ENCODE measurements at regions of chr17 and their contacts with region 1.

Region 1: GRCh38 chr17:31167111-31167510 is 72.3 kb downstream of the NF1 start:
- DNase-seq: no peak
- H3K4me3 Mint-ChIP-seq: no peak overlapping the region
- H3K27ac Mint-ChIP-seq: no peak overlapping the region
- H3K4me1 Mint-ChIP-seq: peaks cover 5% of the 10 kb centered on the region
- H3K27me3 Mint-ChIP-seq: no peaks in the 10 kb centered on the region
- CTCF ChIP-seq: no peak

Region 2: DNA sequence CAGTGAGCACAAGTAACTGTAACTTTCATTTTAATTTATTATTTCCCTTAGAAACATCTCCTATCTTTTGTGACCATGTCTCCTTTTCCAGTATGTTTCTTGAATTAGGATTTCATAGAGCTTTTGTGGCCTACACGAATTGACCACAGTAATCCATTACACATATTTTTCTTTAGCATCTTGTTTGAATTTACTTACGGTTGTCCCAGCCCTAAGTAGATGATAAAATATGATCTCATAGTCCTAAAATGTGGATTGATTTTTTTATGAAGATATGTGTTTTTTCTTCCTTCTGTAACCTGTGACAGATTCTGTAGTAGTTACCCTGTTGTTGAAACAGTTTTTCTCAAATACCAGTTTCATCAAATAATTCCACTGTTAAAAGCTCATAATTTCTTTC is 10.8 kb before region 1 on chr17:
- CTCF ChIA-PET with region 1: interaction called, 3 read pairs
- POLR2A ChIA-PET with region 1: interaction called, 10 read pairs
- intact Hi-C with region 1: no loop called
- DNase-seq: no peak
- H3K4me3 Mint-ChIP-seq: no peak overlapping the region
- H3K27ac Mint-ChIP-seq: no peak overlapping the region
- H3K4me1 Mint-ChIP-seq: peaks cover 24% of the 10 kb centered on the region
- H3K27me3 Mint-ChIP-seq: no peaks in the 10 kb centered on the region
- CTCF ChIP-seq: no peak

Region 3: GRCh38 chr17:31241116-31241515 is 74.0 kb after region 1 on chr17:
- CTCF ChIA-PET with region 1: no interaction called
- POLR2A ChIA-PET with region 1: no interaction called
- intact Hi-C with region 1: no loop called
- DNase-seq: no peak
- H3K4me3 Mint-ChIP-seq: no peak overlapping the region
- H3K27ac Mint-ChIP-seq: no peak overlapping the region
- H3K4me1 Mint-ChIP-seq: no peaks in the 10 kb centered on the region
- H3K27me3 Mint-ChIP-seq: no peaks in the 10 kb centered on the region
- CTCF ChIP-seq: no peak

Region 4: GRCh38 chr17:31275116-31275515 is 108.0 kb after region 1 on chr17:
- CTCF ChIA-PET with region 1: no interaction called
- POLR2A ChIA-PET with region 1: no interaction called
- intact Hi-C with region 1: no loop called
- DNase-seq: no peak
- H3K4me3 Mint-ChIP-seq: no peak overlapping the region
- H3K27ac Mint-ChIP-seq: peak overlapping the region; percentile 92
- H3K4me1 Mint-ChIP-seq: peaks cover 23% of the 10 kb centered on the region
- H3K27me3 Mint-ChIP-seq: no peaks in the 10 kb centered on the region
- CTCF ChIP-seq: no peak

Measured in MCF 10A (cell line).